Sigmoid colon (tissue), 7 donors: ENCODE measurements at regions of chr6 and their contacts with region 1.

Region 1: GRCh38 chr6:30357678-30358540 is 13.0 kb downstream of the RPP21 start:
- DNase-seq: peak; percentile 89
- H3K4me3 ChIP-seq: peak overlapping the region; percentile 44 to 58 (median 50)
- H3K27ac ChIP-seq: peak overlapping the region; percentile 77 to 88 (median 79)
- H3K4me1 ChIP-seq: peaks cover 0 to 19% (median 7%) of the 10 kb centered on the region in 4 donors
- H3K27me3 ChIP-seq: peaks cover 0 to 17% (median 0%) of the 10 kb centered on the region in 3 donors
- CTCF ChIP-seq: peak; percentile 55 to 81 (median 62)
- EP300 ChIP-seq: no peak
- POLR2A ChIP-seq: no peak

Region 2: DNA sequence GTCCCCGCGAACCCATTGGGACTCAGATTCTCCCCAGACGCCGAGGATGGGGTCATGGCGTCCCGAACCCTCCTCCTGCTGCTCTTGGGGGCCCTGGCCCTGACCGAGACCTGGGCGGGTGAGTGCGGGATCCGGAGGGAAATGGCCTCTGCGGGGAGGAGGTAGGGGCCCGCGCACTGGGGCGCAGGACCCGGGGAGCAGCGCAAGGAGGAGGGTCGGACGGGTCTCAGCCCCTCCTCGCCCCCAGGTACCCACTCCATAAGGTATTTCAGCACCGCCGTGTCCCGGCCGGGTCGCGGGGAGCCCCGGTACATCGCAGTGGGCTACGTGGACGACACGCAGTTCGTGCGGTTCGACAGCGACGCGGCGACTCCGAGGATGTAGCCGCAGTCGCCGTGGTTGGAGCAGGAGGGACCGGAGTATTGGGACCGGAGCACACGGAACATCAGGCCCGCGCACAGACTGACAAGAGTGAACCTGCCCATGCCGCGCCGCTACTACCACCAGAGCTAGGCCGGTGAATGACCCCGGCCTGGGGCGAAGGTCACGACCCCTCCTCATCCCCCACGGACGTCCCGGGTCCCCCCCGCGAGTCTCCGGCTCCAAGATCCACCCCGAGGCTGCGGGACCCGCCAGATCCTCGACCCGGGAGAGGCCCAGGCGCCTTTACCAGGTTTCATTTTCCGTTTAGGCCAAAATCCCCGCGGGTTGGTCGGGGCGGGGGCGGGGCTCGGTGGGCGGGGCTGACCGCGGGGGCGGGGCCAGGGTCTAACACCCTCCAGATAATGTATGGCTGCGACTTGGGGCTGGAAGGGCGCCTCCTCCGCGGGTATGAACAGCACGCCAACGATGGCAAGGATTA is 431.3 kb before region 1 on chr6:
- intact Hi-C with region 1: no loop called
- DNase-seq: peak; percentile 81
- H3K4me3 ChIP-seq: peak overlapping the region in 3 of 4 donors; percentile 48 to 69 (median 53)
- H3K27ac ChIP-seq: peak overlapping the region in 3 of 4 donors; percentile 82 to 86 (median 84)
- H3K4me1 ChIP-seq: peaks cover 0 to 4% (median 0%) of the 10 kb centered on the region in 4 donors
- H3K27me3 ChIP-seq: no peaks in the 10 kb centered on the region
- CTCF ChIP-seq: no peak
- EP300 ChIP-seq: no peak
- POLR2A ChIP-seq: peak; percentile 9 to 39

Region 3: DNA sequence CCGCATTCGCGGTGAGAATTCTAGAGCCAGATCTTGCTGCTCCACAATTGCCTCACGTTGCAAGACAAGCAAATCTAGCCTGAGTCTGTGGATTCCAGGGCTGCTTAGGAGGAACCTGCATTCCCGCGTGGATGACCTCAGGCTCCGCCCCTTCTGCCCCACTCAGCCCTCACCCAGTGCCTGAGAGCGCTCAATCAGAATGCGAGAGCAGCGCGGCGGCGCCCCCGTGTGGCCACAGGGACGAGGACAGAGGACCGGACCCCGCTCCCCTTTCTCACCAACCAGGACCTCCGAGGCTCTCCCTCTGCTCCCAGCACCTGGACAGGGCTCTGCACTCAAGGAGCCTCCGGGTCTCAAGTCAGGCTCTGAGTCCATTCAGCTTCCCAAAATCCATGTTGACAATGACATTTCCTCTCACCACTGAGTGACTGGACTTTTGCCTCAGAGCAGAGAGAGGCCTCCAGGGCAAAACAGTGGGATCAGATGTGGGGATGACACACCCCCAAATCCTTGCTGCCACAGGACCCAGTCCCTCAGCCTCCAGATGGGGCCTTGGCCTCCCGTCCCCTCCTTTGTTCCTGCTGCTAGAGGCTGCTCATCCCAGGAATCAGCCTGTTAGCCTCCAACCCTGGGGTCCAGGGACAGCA is 39.0 kb after region 1 on chr6:
- intact Hi-C with region 1: loop called (anchors 1 kb)
- DNase-seq: peak; percentile 86
- H3K4me3 ChIP-seq: no peak overlapping the region
- H3K27ac ChIP-seq: no peak overlapping the region
- H3K4me1 ChIP-seq: peaks cover 0 to 8% (median 2%) of the 10 kb centered on the region in 4 donors
- H3K27me3 ChIP-seq: no peaks in the 10 kb centered on the region
- CTCF ChIP-seq: peak; percentile 67 to 84 (median 74)
- EP300 ChIP-seq: no peak
- POLR2A ChIP-seq: no peak

Region 4: DNA sequence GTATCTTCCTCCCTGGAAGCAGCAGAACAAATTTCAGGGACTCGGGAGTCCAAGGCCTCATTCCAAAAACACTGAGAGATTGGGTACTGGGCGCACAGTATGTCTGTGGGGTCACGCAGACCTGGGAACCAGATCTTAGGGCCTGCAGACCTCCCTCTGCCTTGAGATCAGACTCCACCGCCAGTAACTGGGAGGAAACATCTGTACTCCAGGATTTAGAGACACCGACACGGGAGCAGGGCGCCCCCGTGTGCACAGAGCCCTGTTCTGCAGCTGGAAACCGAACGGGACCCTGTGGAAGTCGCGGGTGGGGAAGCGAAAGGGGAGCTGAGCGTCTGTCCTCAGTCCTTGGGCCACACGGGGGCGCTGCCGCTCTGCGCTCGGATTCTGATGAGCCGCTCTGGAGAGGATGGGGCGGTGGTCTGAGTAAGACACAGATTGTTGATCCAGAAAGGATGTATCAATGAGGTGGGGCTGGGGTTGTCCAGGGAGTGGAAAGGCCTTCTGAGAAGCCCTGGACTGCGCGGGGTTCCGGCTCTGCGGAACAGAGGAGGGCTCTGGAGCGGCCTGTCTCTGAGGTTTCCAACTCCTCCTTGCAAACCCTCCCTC is 95.7 kb after region 1 on chr6:
- intact Hi-C with region 1: loop called (anchors 1 kb)
- DNase-seq: peak; percentile 88
- H3K4me3 ChIP-seq: no peak overlapping the region
- H3K27ac ChIP-seq: no peak overlapping the region
- H3K4me1 ChIP-seq: peaks cover 0 to 21% (median 16%) of the 10 kb centered on the region in 4 donors
- H3K27me3 ChIP-seq: peaks cover 25 to 93% (median 87%) of the 10 kb centered on the region in 3 donors
- CTCF ChIP-seq: peak; percentile 63 to 82 (median 78)
- EP300 ChIP-seq: no peak
- POLR2A ChIP-seq: no peak